Dendritic cell treated with granulocyte-macrophage colony-stimulating factor and Interleukin-4, amounts not matched to agents 40 ng/mL and 50 ng/mL, for 4 days (primary cell): ENCODE measurements at regions of chr14 and their contacts with region 1.

Region 1: DNA sequence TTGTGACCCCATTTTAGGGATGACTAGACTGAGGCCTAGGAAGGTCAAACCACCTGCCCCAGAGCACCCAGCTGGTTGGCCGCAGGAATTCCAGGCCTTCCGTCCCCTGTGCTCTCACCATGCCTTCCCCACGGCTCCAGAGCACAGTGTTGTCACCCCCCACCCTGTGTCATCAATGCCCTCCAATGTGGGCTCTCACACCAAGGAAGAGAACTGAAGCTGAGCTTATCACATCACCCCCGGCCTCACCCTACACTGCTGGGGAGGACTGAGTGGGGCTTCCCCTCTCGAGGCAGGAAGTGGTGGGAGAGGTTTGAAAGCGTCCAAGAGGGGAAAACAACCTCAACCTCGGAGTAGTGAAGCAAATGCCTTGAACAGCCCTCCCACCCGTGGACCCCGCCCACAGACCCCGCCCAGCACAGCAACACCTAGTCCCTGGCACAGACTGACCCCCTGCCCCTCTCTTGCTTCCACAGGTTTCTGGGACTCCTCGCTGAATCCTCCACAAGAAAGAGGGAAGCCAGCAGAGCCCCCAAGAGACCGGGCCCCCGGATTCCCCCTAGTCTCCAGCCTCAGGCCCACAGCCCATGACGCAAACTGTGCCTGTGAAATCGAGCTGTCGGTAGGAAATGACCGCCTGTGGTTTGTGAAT is 97.2 kb downstream of the LGMN start:
- H3K4me3 Mint-ChIP-seq: peak overlapping the region; percentile 99
- H3K27ac Mint-ChIP-seq: peak overlapping the region; percentile 91
- H3K4me1 Mint-ChIP-seq: peaks cover 86% of the 10 kb centered on the region
- H3K27me3 Mint-ChIP-seq: no peaks in the 10 kb centered on the region

Region 2: GRCh38 chr14:92596331-92596911 is 54.8 kb before region 1 on chr14:
- intact Hi-C with region 1: loop called (anchors 5 kb)
- H3K4me3 Mint-ChIP-seq: no peak overlapping the region
- H3K27ac Mint-ChIP-seq: no peak overlapping the region
- H3K4me1 Mint-ChIP-seq: peaks cover 68% of the 10 kb centered on the region
- H3K27me3 Mint-ChIP-seq: no peaks in the 10 kb centered on the region

Region 3: GRCh38 chr14:92612988-92613658 is 38.1 kb before region 1 on chr14:
- intact Hi-C with region 1: no loop called
- H3K4me3 Mint-ChIP-seq: no peak overlapping the region
- H3K27ac Mint-ChIP-seq: no peak overlapping the region
- H3K4me1 Mint-ChIP-seq: peaks cover 49% of the 10 kb centered on the region
- H3K27me3 Mint-ChIP-seq: no peaks in the 10 kb centered on the region

Region 4: GRCh38 chr14:92633274-92633616 is 18.0 kb before region 1 on chr14:
- intact Hi-C with region 1: loop called (anchors 2 kb)
- H3K4me3 Mint-ChIP-seq: no peak overlapping the region
- H3K27ac Mint-ChIP-seq: peak overlapping the region; percentile 69
- H3K4me1 Mint-ChIP-seq: peaks cover 54% of the 10 kb centered on the region
- H3K27me3 Mint-ChIP-seq: no peaks in the 10 kb centered on the region